H1 (cell line): ENCODE measurements at regions of chrX and their contacts with region 1.

Region 1: GRCh38 chrX:104122829-104123228 is 10.5 kb downstream of the ZCCHC18 start:
- DNase-seq: no peak
- H3K4me3 ChIP-seq: no peak overlapping the region
- H3K27ac ChIP-seq: no peak overlapping the region
- H3K4me1 ChIP-seq: no peaks in the 10 kb centered on the region
- H3K27me3 ChIP-seq: no peaks in the 10 kb centered on the region
- CTCF ChIP-seq: no peak
- EP300 ChIP-seq: no peak
- POLR2A ChIP-seq: no peak
- RAD21 ChIP-seq: no peak

Region 2: GRCh38 chrX:104136241-104137019 is 13.6 kb after region 1 on chrX:
- CTCF ChIA-PET with region 1: interaction called, 10 read pairs
- POLR2A ChIA-PET with region 1: no interaction called
- DNase-seq: no peak
- H3K4me3 ChIP-seq: peak overlapping the region in 3 of 4 experiments; percentile 14 to 43 (median 15); a peak in 3 of 8 replicates
- H3K27ac ChIP-seq: no peak overlapping the region
- H3K4me1 ChIP-seq: no peaks in the 10 kb centered on the region
- H3K27me3 ChIP-seq: no peaks in the 10 kb centered on the region
- CTCF ChIP-seq: peak; percentile 31 to 70 (median 62)
- EP300 ChIP-seq: no peak
- POLR2A ChIP-seq: no peak
- RAD21 ChIP-seq: peak; percentile 79

Region 3: DNA sequence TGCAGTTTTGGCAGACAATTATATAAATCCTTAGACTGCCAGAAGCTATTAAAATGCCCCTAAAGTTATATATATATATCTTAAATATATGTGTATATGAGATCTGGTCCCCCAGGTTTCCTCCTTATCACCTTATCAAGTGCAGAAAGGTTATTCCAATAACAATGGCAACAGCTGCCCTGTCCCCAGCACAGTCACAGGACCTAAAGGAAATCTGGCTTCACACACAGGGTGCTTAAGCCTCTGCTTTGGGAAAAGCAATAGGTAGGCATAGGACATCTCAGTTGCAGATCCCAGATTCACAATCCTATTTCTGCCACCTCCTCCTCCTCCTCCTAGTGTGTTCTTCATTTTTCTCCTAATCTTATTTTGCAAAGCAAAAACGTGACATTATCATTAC is 28.2 kb after region 1 on chrX:
- CTCF ChIA-PET with region 1: no interaction called
- POLR2A ChIA-PET with region 1: no interaction called
- DNase-seq: no peak
- H3K4me3 ChIP-seq: no peak overlapping the region
- H3K27ac ChIP-seq: no peak overlapping the region
- H3K4me1 ChIP-seq: no peaks in the 10 kb centered on the region
- H3K27me3 ChIP-seq: no peaks in the 10 kb centered on the region
- CTCF ChIP-seq: no peak
- EP300 ChIP-seq: no peak
- POLR2A ChIP-seq: no peak
- RAD21 ChIP-seq: no peak

Region 4: GRCh38 chrX:104165894-104166737 is 43.3 kb after region 1 on chrX and contains the start of gene FAM199X:
- CTCF ChIA-PET with region 1: no interaction called
- POLR2A ChIA-PET with region 1: no interaction called
- DNase-seq: peak; percentile 43 to 86
- H3K4me3 ChIP-seq: peak within 1 kb of the TSS; percentile 74 to 92 (median 85)
- H3K27ac ChIP-seq: peak within 1 kb of the TSS; percentile 47; the same call in 1 of the 2 replicates
- H3K4me1 ChIP-seq: no peaks in the 10 kb centered on the region
- H3K27me3 ChIP-seq: no peaks in the 10 kb centered on the region
- CTCF ChIP-seq: peak; percentile 51 to 63 (median 55)
- EP300 ChIP-seq: no peak
- POLR2A ChIP-seq: peak in 1 of 2 experiments; percentile 58; a peak in 2 of 3 replicates
- RAD21 ChIP-seq: peak in 1 of 2 experiments; percentile 23; a peak in 1 of 4 replicates
- total RNA-seq, gene FAM199X: 14.4 and 14.9 TPM in 2 replicates